ENCODE measurements at regions of chr9 and their contacts with region 1.

Region 1: DNA sequence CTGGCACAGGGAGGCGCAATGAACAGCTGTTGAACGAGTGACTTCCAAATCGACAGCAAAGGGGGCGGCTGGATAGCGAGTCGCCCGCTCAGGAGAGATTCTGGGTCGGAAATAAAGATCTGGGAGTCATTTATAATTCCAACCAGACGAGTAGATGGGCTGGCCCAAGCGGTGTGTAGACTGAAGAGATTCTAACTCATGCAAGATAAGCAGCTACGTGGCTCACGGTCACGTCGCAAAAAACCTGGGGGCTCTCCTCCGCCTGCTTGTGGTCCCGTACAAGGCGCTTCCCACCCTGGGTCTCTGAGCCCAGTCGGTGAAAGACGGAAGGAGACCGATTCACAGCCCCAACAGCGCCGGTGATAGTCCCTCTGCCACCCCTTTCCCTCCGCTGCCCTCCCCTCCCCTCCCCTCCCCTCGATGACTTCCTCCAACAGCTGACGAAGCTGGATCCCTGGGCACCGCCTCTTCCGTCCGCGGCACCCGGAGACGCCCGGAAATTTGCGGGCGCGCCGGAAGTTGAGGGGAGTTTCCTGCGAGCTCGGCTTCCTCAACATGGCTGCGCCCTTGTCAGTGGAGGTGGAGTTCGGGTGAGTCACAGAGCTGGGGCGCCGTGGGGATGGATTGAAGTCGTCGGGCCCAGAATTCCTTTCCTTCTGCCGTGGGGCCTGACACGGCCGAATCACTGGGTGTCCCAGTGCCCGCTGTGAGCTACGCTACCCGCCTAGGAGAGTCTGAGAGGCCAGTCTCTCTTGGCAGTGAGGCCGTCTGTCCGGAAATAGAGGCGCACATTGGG is at the start of gene URM1:
- DNase-seq: peak; percentile 88 to 97 (median 95)
- ATAC-seq: peak; percentile 98
- H3K4me3 ChIP-seq: peak within 1 kb of the TSS; percentile 92
- H3K4me3 Mint-ChIP-seq: peak within 1 kb of the TSS; percentile 86 to 99 (median 96)
- H3K27ac ChIP-seq: peak within 1 kb of the TSS; percentile 94
- H3K27ac Mint-ChIP-seq: peak within 1 kb of the TSS; percentile 94 to 99 (median 98)
- H3K4me1 ChIP-seq: peaks cover 17% of the 10 kb centered on the region in 2 donors
- H3K4me1 Mint-ChIP-seq: peaks cover 18 to 41% (median 36%) of the 10 kb centered on the region in 7 donors
- H3K27me3 ChIP-seq: no peaks in the 10 kb centered on the region
- H3K27me3 Mint-ChIP-seq: no peaks in the 10 kb centered on the region
- total RNA-seq, gene URM1: 32.3 to 72.4 (median 47.5) TPM

Region 2: GRCh38 chr9:128191406-128192046 is 179.5 kb before region 1 on chr9 and contains the start of gene CIZ1:
- CTCF ChIA-PET with region 1: no interaction called
- POLR2A ChIA-PET with region 1: no interaction called
- intact Hi-C with region 1: loop called in 1 of 2 experiments (anchors 2 kb)
- DNase-seq: peak; percentile 51 to 86 (median 69)
- ATAC-seq: peak; percentile 95
- H3K4me3 ChIP-seq: peak within 1 kb of the TSS; percentile 76
- H3K4me3 Mint-ChIP-seq: peak within 1 kb of the TSS; percentile 92 to 99 (median 96)
- H3K27ac ChIP-seq: peak within 1 kb of the TSS; percentile 89
- H3K27ac Mint-ChIP-seq: peak within 1 kb of the TSS; percentile 84 to 93 (median 90)
- H3K4me1 ChIP-seq: peaks cover 12 to 16% of the 10 kb centered on the region in 2 donors
- H3K4me1 Mint-ChIP-seq: peaks cover 13 to 39% (median 31%) of the 10 kb centered on the region in 7 donors
- H3K27me3 ChIP-seq: no peaks in the 10 kb centered on the region
- H3K27me3 Mint-ChIP-seq: peaks cover 0 to 13% (median 0%) of the 10 kb centered on the region in 5 donors
- total RNA-seq, gene CIZ1: 110 to 163 (median 142) TPM

Region 3: DNA sequence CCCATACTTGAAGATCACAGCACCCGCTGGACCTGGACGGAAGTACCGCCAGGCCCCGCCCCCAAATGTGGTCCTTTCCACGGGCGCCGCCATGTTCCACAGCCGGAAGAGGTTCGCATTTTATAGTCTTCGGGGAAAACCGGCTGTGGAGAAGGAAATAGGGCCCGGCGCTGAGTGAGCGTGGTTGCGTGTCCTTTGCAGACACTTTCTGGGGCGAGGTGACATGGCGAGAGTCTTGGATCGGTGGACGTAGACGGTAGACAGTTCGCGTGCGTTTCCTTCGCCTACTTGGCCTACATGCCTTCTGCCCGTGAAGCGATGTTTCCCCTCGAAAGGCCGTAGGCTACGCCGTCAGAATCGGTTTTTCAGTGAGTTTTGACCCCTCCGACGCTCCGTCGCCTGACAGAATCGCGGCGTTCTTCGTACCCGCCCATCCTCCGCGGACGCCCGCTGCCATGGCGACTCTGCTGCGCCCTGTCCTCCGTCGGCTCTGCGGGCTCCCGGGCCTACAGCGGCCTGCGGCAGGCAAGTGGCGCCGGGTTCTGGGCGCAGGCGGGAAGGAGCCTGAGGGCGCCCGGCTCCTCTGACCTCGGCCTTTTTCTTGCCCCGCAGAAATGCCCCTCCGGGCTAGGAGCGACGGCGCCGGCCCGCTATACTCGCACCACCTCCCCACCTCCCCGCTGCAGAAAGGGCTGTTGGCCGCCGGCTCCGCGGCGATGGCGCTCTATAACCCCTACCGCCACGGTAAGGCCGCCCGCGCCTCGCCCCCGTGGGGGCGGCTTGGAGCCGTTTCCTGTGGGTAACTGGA is 48.4 kb before region 1 on chr9 and contains the starts of genes COQ4 and TRUB2:
- CTCF ChIA-PET with region 1: interaction called, 4 read pairs
- POLR2A ChIA-PET with region 1: interaction called, 3 read pairs
- intact Hi-C with region 1: loop called (anchors 1 kb)
- DNase-seq: peak; percentile 80 to 95 (median 94)
- ATAC-seq: peak; percentile 95
- H3K4me3 ChIP-seq: peak within 1 kb of the TSS; percentile 98
- H3K4me3 Mint-ChIP-seq: peak within 1 kb of the TSS; percentile 82 to 99 (median 96)
- H3K27ac ChIP-seq: peak within 1 kb of the TSS; percentile 85
- H3K27ac Mint-ChIP-seq: peak within 1 kb of the TSS; percentile 95 to 99 (median 98)
- H3K4me1 ChIP-seq: peaks cover 10 to 13% of the 10 kb centered on the region in 2 donors
- H3K4me1 Mint-ChIP-seq: peaks cover 4 to 45% (median 29%) of the 10 kb centered on the region in 7 donors
- H3K27me3 ChIP-seq: no peaks in the 10 kb centered on the region
- H3K27me3 Mint-ChIP-seq: peaks cover 0 to 2% (median 0%) of the 10 kb centered on the region in 5 donors
- total RNA-seq, gene COQ4: 32.9 to 47.2 (median 42.4) TPM
- total RNA-seq, gene TRUB2: 11.5 to 27.2 (median 21.6) TPM

Region 4: GRCh38 chr9:128504485-128505413 is 133.7 kb after region 1 on chr9 and contains the start of gene GLE1:
- CTCF ChIA-PET with region 1: no interaction called
- POLR2A ChIA-PET with region 1: interaction called, 4 read pairs
- intact Hi-C with region 1: loop called in 1 of 2 experiments (anchors 5 kb)
- DNase-seq: peak; percentile 93 to 99 (median 97)
- ATAC-seq: peak; percentile 98
- H3K4me3 ChIP-seq: peak within 1 kb of the TSS; percentile 97
- H3K4me3 Mint-ChIP-seq: peak within 1 kb of the TSS; percentile 92 to 100 (median 99)
- H3K27ac ChIP-seq: peak within 1 kb of the TSS; percentile 92
- H3K27ac Mint-ChIP-seq: peak within 1 kb of the TSS; percentile 82 to 100 (median 99)
- H3K4me1 ChIP-seq: peaks cover 8 to 11% of the 10 kb centered on the region in 2 donors
- H3K4me1 Mint-ChIP-seq: peaks cover 0 to 38% (median 34%) of the 10 kb centered on the region in 7 donors
- H3K27me3 ChIP-seq: no peaks in the 10 kb centered on the region
- H3K27me3 Mint-ChIP-seq: no peaks in the 10 kb centered on the region
- total RNA-seq, gene GLE1: 14.2 to 46.5 (median 30.5) TPM

Region 5: DNA sequence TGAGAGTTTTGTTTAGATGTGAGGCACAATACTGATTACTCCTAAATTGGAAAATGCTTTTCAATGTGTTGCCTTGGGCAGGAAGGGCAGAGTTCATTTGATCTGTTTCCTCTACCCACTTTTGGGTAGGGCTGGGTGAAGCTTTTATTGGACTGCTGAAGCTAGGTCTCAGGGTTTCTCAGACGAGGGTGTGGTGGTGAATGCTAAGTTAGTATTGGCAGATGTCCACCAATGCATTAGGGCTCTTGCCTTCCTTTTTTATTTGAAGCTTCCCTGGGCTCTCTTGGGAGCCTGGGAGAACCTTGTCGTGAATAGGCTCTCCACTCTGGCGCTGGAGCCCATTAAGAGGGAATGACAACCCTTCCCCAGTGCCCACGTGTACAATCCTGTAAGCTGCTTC is 204.4 kb after region 1 on chr9:
- CTCF ChIA-PET with region 1: no interaction called
- POLR2A ChIA-PET with region 1: no interaction called
- intact Hi-C with region 1: no loop called
- DNase-seq: no peak
- ATAC-seq: no peak
- H3K4me3 ChIP-seq: no peak overlapping the region
- H3K4me3 Mint-ChIP-seq: peak overlapping the region in 4 of 10 donors; percentile 3 to 50 (median 30)
- H3K27ac ChIP-seq: peak overlapping the region; percentile 23
- H3K27ac Mint-ChIP-seq: peak overlapping the region in 7 of 9 donors; percentile 28 to 77 (median 68)
- H3K4me1 ChIP-seq: peaks cover 0 to 11% of the 10 kb centered on the region in 2 donors
- H3K4me1 Mint-ChIP-seq: peaks cover 0 to 24% (median 17%) of the 10 kb centered on the region in 7 donors
- H3K27me3 ChIP-seq: no peaks in the 10 kb centered on the region
- H3K27me3 Mint-ChIP-seq: no peaks in the 10 kb centered on the region

Region 6: GRCh38 chr9:128947422-128948301 is 576.6 kb after region 1 on chr9 and contains the starts of genes DOLK and NUP188:
- CTCF ChIA-PET with region 1: no interaction called
- POLR2A ChIA-PET with region 1: no interaction called
- intact Hi-C with region 1: loop called in 1 of 2 experiments (anchors 2 kb)
- DNase-seq: peak; percentile 96 to 100 (median 98)
- ATAC-seq: peak; percentile 95
- H3K4me3 ChIP-seq: peak within 1 kb of the TSS; percentile 87
- H3K4me3 Mint-ChIP-seq: peak within 1 kb of the TSS; percentile 93 to 99 (median 98)
- H3K27ac ChIP-seq: peak within 1 kb of the TSS; percentile 97
- H3K27ac Mint-ChIP-seq: peak within 1 kb of the TSS; percentile 89 to 99 (median 97)
- H3K4me1 ChIP-seq: peaks cover 8 to 14% of the 10 kb centered on the region in 2 donors
- H3K4me1 Mint-ChIP-seq: peaks cover 16 to 49% (median 32%) of the 10 kb centered on the region in 7 donors
- H3K27me3 ChIP-seq: no peaks in the 10 kb centered on the region
- H3K27me3 Mint-ChIP-seq: no peaks in the 10 kb centered on the region
- total RNA-seq, gene DOLK: 6.0 to 12.8 (median 9.5) TPM
- total RNA-seq, gene NUP188: 55.7 to 98.7 (median 63.7) TPM

Region 7: DNA sequence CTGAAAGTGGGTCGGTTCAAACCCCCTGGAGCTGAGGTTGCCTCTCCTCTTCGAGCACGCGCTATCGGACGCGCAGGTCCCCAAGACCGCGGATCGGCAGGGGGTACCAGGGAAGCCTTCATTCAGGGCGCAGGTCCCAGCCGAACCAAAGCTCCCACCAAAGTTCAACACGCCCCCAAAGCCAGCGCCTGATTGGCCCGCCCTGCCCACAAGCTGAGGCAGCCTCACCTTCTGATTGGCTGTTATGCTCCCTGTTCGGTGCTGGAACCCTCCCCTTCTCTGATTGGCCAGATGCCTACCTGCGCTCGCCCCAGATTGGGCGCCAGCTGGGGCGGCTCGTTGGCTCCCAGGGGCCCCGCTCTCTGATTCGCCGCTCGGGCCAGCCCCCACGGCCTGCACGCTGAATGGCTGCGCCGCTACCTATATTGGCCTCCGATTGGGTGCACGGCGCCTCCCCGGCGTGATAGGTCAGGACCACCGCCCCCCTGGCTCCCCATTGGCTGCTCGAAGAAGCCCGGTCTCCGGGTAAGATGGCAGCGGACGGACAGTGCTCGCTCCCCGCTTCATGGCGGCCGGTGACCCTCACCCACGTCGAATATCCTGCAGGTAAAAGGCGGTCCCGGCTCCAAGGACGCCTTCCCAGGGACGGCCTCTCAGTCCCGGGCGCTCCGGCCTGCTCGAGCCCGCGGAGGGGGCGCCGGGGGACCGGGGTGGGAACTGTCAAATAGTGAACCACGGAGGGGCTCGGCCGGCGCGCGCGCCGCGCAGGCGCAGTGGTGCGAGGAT is 709.8 kb after region 1 on chr9 and contains the start of gene DOLPP1:
- CTCF ChIA-PET with region 1: no interaction called
- POLR2A ChIA-PET with region 1: no interaction called
- intact Hi-C with region 1: loop called in 1 of 2 experiments (anchors 1 kb)
- DNase-seq: peak; percentile 96 to 99 (median 99)
- ATAC-seq: peak; percentile 97
- H3K4me3 ChIP-seq: peak within 1 kb of the TSS; percentile 82
- H3K4me3 Mint-ChIP-seq: peak within 1 kb of the TSS; percentile 88 to 94 (median 90)
- H3K27ac ChIP-seq: peak within 1 kb of the TSS; percentile 79
- H3K27ac Mint-ChIP-seq: peak within 1 kb of the TSS; percentile 69 to 93 (median 87)
- H3K4me1 ChIP-seq: peaks cover 19 to 20% of the 10 kb centered on the region in 2 donors
- H3K4me1 Mint-ChIP-seq: peaks cover 6 to 41% (median 26%) of the 10 kb centered on the region in 7 donors
- H3K27me3 ChIP-seq: no peaks in the 10 kb centered on the region
- H3K27me3 Mint-ChIP-seq: no peaks in the 10 kb centered on the region
- total RNA-seq, gene DOLPP1: 5.7 to 17.1 (median 11.9) TPM

Measured in naive thymus-derived CD4-positive, alpha-beta T cell (primary cell).